ENCODE measurements at regions of chr15 and their contacts with region 1.

Region 1: GRCh38 chr15:33086507-33087121 is 107.9 kb downstream of the FMN1 start:
- DNase-seq: peak in 3 of 14 experiments; percentile 41 to 72 (median 69)
- ATAC-seq: peak; percentile 71
- H3K4me3 ChIP-seq: no peak overlapping the region
- H3K4me3 Mint-ChIP-seq: no peak overlapping the region
- H3K27ac ChIP-seq: no peak overlapping the region
- H3K27ac Mint-ChIP-seq: no peak overlapping the region
- H3K4me1 ChIP-seq: no peaks in the 10 kb centered on the region
- H3K4me1 Mint-ChIP-seq: peaks cover 16% of the 10 kb centered on the region
- H3K27me3 ChIP-seq: no peaks in the 10 kb centered on the region
- H3K27me3 Mint-ChIP-seq: no peaks in the 10 kb centered on the region
- CTCF ChIP-seq: peak; percentile 77

Region 2: DNA sequence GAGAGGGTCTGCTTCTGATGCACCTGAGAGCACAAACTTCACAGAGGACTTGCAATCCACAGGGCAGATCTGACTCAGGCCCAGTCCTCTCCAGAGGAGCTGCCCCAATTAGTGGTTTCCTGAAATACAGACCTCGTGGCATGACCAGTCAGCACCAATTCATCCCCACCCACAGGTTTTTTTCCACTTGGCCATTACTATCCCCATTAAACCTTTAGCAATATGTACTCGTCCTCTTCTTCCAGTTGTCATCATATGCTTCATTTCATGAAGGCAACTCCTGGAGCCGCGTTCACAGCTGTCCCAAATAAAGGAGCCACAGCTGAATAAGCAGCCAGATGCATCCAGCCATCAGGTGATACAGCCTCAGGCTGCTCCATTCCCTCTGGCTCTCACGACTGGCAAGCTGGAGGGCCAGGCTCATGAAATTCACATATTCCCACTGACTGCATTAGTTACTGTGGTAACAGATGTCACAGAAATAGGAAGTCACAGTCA is 55.2 kb before region 1 on chr15:
- CTCF ChIA-PET with region 1: no interaction called
- POLR2A ChIA-PET with region 1: no interaction called
- intact Hi-C with region 1: no loop called
- DNase-seq: no peak
- ATAC-seq: no peak
- H3K4me3 ChIP-seq: no peak overlapping the region
- H3K4me3 Mint-ChIP-seq: no peak overlapping the region
- H3K27ac ChIP-seq: no peak overlapping the region
- H3K27ac Mint-ChIP-seq: no peak overlapping the region
- H3K4me1 ChIP-seq: no peaks in the 10 kb centered on the region
- H3K4me1 Mint-ChIP-seq: peaks cover 14% of the 10 kb centered on the region
- H3K27me3 ChIP-seq: no peaks in the 10 kb centered on the region
- H3K27me3 Mint-ChIP-seq: no peaks in the 10 kb centered on the region
- CTCF ChIP-seq: no peak

Region 3: GRCh38 chr15:33104212-33104611 is 17.6 kb after region 1 on chr15:
- CTCF ChIA-PET with region 1: no interaction called
- POLR2A ChIA-PET with region 1: interaction called, 6 read pairs
- intact Hi-C with region 1: loop called in 1 of 2 experiments (anchors 2 kb)
- DNase-seq: peak in 4 of 14 experiments; percentile 42 to 63 (median 46)
- ATAC-seq: peak; percentile 95
- H3K4me3 ChIP-seq: no peak overlapping the region
- H3K4me3 Mint-ChIP-seq: peak overlapping the region; percentile 59
- H3K27ac ChIP-seq: peak overlapping the region in 1 of 2 donors; percentile 22
- H3K27ac Mint-ChIP-seq: peak overlapping the region; percentile 4
- H3K4me1 ChIP-seq: peaks cover 3% of the 10 kb centered on the region
- H3K4me1 Mint-ChIP-seq: peaks cover 28% of the 10 kb centered on the region
- H3K27me3 ChIP-seq: no peaks in the 10 kb centered on the region
- H3K27me3 Mint-ChIP-seq: no peaks in the 10 kb centered on the region
- CTCF ChIP-seq: no peak

Region 4: GRCh38 chr15:33215941-33216872 is 129.6 kb after region 1 on chr15:
- CTCF ChIA-PET with region 1: no interaction called
- POLR2A ChIA-PET with region 1: no interaction called
- intact Hi-C with region 1: loop called in 1 of 2 experiments (anchors 10 kb)
- DNase-seq: peak in 3 of 14 experiments; percentile 31 to 49 (median 39)
- ATAC-seq: peak; percentile 43
- H3K4me3 ChIP-seq: no peak overlapping the region
- H3K4me3 Mint-ChIP-seq: no peak overlapping the region
- H3K27ac ChIP-seq: no peak overlapping the region
- H3K27ac Mint-ChIP-seq: no peak overlapping the region
- H3K4me1 ChIP-seq: no peaks in the 10 kb centered on the region
- H3K4me1 Mint-ChIP-seq: no peaks in the 10 kb centered on the region
- H3K27me3 ChIP-seq: no peaks in the 10 kb centered on the region
- H3K27me3 Mint-ChIP-seq: no peaks in the 10 kb centered on the region
- CTCF ChIP-seq: peak; percentile 72

Region 5: DNA sequence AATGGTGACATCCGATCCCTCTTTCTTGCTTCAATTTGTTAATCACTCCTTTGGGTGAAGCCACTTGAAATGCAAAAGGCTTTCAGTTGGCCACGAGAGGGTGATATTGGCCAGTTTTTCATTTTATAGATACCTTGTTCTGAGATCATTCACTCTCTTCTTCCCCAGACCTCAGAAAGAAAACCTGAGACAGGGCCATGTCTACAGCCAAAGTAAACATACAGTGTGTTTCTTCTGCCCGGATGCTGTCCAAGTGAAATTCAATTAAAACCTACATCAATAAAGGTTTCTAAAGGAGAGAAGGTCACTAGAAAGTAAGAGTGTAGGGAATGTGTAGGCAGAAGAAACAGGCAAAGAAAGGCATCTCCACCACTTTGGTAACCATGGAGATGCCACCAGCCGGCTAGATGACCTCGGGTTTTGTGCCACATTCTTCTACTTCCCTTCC is 147.4 kb after region 1 on chr15:
- CTCF ChIA-PET with region 1: no interaction called
- POLR2A ChIA-PET with region 1: no interaction called
- intact Hi-C with region 1: loop called (anchors 5 kb)
- DNase-seq: peak in 3 of 14 experiments; percentile 11 to 17 (median 15)
- ATAC-seq: no peak
- H3K4me3 ChIP-seq: no peak overlapping the region
- H3K4me3 Mint-ChIP-seq: no peak overlapping the region
- H3K27ac ChIP-seq: no peak overlapping the region
- H3K27ac Mint-ChIP-seq: no peak overlapping the region
- H3K4me1 ChIP-seq: no peaks in the 10 kb centered on the region
- H3K4me1 Mint-ChIP-seq: no peaks in the 10 kb centered on the region
- H3K27me3 ChIP-seq: peaks cover 3 to 4% of the 10 kb centered on the region in 2 experiments
- H3K27me3 Mint-ChIP-seq: peaks cover 6% of the 10 kb centered on the region
- CTCF ChIP-seq: no peak

Region 6: GRCh38 chr15:33374226-33374914 is 287.8 kb after region 1 on chr15:
- CTCF ChIA-PET with region 1: no interaction called
- POLR2A ChIA-PET with region 1: no interaction called
- intact Hi-C with region 1: no loop called
- DNase-seq: no peak
- ATAC-seq: no peak
- H3K4me3 ChIP-seq: no peak overlapping the region
- H3K4me3 Mint-ChIP-seq: no peak overlapping the region
- H3K27ac ChIP-seq: no peak overlapping the region
- H3K27ac Mint-ChIP-seq: no peak overlapping the region
- H3K4me1 ChIP-seq: no peaks in the 10 kb centered on the region
- H3K4me1 Mint-ChIP-seq: no peaks in the 10 kb centered on the region
- H3K27me3 ChIP-seq: no peaks in the 10 kb centered on the region
- H3K27me3 Mint-ChIP-seq: peaks cover 40% of the 10 kb centered on the region
- CTCF ChIP-seq: no peak

Region 7: DNA sequence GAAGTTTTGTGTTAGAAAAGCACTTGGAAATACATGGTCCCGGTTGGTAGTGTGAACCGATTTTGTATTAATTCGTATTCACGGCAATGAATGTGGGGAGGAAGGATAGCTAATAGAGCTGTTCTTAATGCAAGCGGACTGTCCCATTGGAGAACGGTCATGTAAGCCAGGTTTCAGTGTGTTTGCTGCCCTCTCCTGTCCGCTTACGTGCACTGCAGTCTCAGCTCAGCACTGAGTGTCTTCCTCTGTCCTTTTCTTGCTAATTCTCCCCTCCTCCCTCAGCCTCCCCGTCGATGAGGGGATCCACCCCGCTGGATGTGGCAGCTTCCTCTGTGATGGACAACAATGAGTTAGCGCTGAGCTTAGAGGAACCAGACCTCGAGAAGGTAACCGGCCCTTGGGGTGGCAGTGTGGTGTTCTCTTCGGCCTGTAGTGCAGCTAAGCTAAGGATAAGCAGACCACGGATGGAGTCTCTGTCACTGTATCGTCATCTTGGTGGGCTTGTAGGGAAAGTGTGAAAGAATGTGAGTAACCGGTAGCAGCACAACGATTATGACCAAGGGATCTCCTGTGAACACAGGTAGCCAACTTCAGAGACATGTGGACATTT is 614.2 kb after region 1 on chr15:
- CTCF ChIA-PET with region 1: interaction called, 6 read pairs
- POLR2A ChIA-PET with region 1: no interaction called
- intact Hi-C with region 1: loop called (anchors 1 kb)
- DNase-seq: peak; percentile 29 to 73 (median 47)
- ATAC-seq: peak; percentile 68
- H3K4me3 ChIP-seq: no peak overlapping the region
- H3K4me3 Mint-ChIP-seq: no peak overlapping the region
- H3K27ac ChIP-seq: no peak overlapping the region
- H3K27ac Mint-ChIP-seq: no peak overlapping the region
- H3K4me1 ChIP-seq: no peaks in the 10 kb centered on the region
- H3K4me1 Mint-ChIP-seq: no peaks in the 10 kb centered on the region
- H3K27me3 ChIP-seq: peaks cover 2 to 6% of the 10 kb centered on the region in 2 experiments
- H3K27me3 Mint-ChIP-seq: peaks cover 9% of the 10 kb centered on the region
- CTCF ChIP-seq: peak; percentile 94

Measured in CD4-positive, alpha-beta T cell (primary cell).